ENCODE measurements at regions of chr13 and their contacts with region 1.

Region 1: DNA sequence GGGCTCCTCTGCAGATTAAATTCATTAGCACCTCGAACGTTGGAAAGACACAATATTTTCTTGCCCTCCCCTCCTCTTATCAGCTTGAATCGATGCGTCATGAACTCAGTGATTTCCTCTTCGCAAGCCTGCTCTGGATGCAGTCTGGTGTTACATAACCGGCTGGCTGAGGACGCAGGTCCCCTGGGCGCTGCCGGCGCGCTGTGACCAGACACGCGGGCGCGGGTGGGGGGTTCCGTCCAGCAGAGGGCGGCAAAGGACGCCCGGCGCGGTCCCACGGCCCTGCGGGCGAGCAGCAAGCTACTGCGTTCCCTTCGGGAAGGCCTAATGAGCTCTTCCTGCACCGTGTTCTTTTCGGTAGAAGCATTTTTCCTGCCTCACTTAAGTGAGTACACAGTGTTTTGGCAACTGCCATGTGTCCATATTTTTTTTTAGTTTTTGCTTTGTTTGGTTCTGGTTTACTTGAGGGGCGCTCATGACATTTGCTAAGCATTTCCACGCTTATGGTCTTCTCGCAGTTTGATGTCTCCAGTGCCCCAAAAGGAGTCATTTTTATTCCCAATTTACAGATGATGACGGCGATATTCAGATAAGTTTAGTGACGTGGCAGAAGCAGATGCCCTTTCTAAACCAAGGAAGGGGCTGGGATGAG is 112.2 kb upstream of the MBNL2 start:
- DNase-seq: peak; percentile 75
- H3K4me3 Mint-ChIP-seq: no peak overlapping the region
- H3K27ac Mint-ChIP-seq: no peak overlapping the region
- H3K4me1 Mint-ChIP-seq: peaks cover 9% of the 10 kb centered on the region
- H3K27me3 Mint-ChIP-seq: peaks cover 46% of the 10 kb centered on the region

Region 2: DNA sequence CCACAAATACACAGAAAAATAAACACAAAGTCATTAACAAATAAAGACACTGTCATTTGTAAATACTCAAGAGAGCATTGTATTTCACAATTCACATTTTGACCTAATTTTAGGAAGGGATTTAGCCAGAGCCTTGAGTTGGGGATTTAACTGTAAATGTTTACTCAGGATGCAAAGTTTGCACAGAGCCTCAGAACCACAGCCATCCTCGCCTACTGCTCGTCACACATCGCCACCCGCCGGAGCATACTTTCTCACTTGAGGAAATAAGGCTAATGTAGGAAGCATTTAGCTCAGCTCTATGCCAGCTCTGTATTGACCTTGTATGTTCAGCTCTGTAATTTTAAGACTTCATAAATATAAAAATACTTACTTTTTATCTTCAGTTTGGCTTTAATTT is 558.4 kb before region 1 on chr13:
- intact Hi-C with region 1: no loop called
- DNase-seq: no peak
- H3K4me3 Mint-ChIP-seq: no peak overlapping the region
- H3K27ac Mint-ChIP-seq: no peak overlapping the region
- H3K4me1 Mint-ChIP-seq: no peaks in the 10 kb centered on the region
- H3K27me3 Mint-ChIP-seq: no peaks in the 10 kb centered on the region

Region 3: DNA sequence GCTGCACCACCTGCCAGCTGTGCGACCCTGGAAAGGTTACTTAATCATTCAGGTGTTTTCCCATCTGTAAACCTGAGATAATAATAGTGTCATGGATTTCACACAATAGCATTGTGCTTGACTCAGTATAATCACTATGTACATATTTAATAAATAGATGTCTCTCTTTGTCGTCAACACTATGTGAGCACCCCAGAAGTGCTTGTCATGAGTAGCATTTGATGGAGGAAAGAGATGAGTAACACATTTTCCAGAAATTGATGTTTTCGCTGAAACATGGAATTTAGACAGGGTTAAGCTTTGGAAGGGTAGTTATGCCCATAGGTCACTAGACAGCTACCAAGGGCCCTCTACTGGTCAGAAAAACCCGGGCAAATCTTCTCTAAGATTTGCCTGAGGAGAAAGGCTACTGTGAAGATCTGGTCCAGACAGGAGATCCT is 102.7 kb after region 1 on chr13:
- intact Hi-C with region 1: loop called (anchors 5 kb)
- DNase-seq: no peak
- H3K4me3 Mint-ChIP-seq: no peak overlapping the region
- H3K27ac Mint-ChIP-seq: no peak overlapping the region
- H3K4me1 Mint-ChIP-seq: peaks cover 58% of the 10 kb centered on the region
- H3K27me3 Mint-ChIP-seq: peaks cover 2% of the 10 kb centered on the region

Region 4: GRCh38 chr13:97344265-97345175 is 234.6 kb after region 1 on chr13:
- intact Hi-C with region 1: loop called (anchors 1 kb)
- DNase-seq: no peak
- H3K4me3 Mint-ChIP-seq: no peak overlapping the region
- H3K27ac Mint-ChIP-seq: no peak overlapping the region
- H3K4me1 Mint-ChIP-seq: peaks cover 3% of the 10 kb centered on the region
- H3K27me3 Mint-ChIP-seq: no peaks in the 10 kb centered on the region

Region 5: GRCh38 chr13:97521726-97522125 is 411.8 kb after region 1 on chr13:
- intact Hi-C with region 1: no loop called
- DNase-seq: no peak
- H3K4me3 Mint-ChIP-seq: no peak overlapping the region
- H3K27ac Mint-ChIP-seq: no peak overlapping the region
- H3K4me1 Mint-ChIP-seq: no peaks in the 10 kb centered on the region
- H3K27me3 Mint-ChIP-seq: peaks cover 4% of the 10 kb centered on the region